Activated CD4-positive, alpha-beta T cell treated with anti-CD3 and anti-CD28 coated beads for 36 hours (primary cell): ENCODE measurements at regions of chr1 and their contacts with region 1.

Region 1: GRCh38 chr1:39098546-39099250 is 72.5 kb downstream of the NDUFS5 start:
- DNase-seq: peak; percentile 77
- ATAC-seq: peak; percentile 88
- H3K4me3 Mint-ChIP-seq: no peak overlapping the region
- H3K27ac Mint-ChIP-seq: no peak overlapping the region
- H3K4me1 Mint-ChIP-seq: peaks cover 22% of the 10 kb centered on the region
- H3K27me3 Mint-ChIP-seq: peaks cover 2% of the 10 kb centered on the region

Region 2: DNA sequence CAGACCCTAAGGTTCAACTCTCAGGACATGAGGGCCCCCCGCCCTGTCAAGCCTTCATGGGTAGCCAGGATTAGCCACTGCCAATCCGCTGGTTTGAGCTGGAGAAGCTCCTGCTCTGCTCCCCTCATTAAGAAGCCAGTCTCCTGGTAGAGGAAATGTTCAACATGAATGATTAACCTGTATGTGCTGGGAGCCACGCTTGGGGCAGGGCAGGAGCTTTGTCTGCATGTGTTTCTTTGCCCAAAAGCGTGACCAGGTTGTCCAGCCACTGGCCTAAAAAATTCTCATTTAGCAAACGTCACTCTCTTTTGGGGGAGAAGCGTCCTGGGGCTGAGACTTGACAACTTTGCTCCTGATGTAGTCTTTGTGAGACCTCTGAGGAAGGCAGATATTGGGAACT is 335.6 kb before region 1 on chr1:
- CTCF ChIA-PET with region 1: no interaction called
- POLR2A ChIA-PET with region 1: no interaction called
- intact Hi-C with region 1: no loop called
- DNase-seq: no peak
- ATAC-seq: no peak
- H3K4me3 Mint-ChIP-seq: no peak overlapping the region
- H3K27ac Mint-ChIP-seq: no peak overlapping the region
- H3K4me1 Mint-ChIP-seq: no peaks in the 10 kb centered on the region
- H3K27me3 Mint-ChIP-seq: peaks cover 21% of the 10 kb centered on the region

Region 3: GRCh38 chr1:39189592-39190041 is 90.9 kb after region 1 on chr1:
- CTCF ChIA-PET with region 1: interaction called, 31 read pairs
- POLR2A ChIA-PET with region 1: interaction called, 3 read pairs
- intact Hi-C with region 1: loop called (anchors 1 to 2 kb)
- DNase-seq: no peak
- ATAC-seq: no peak
- H3K4me3 Mint-ChIP-seq: no peak overlapping the region
- H3K27ac Mint-ChIP-seq: peak overlapping the region; percentile 91
- H3K4me1 Mint-ChIP-seq: peaks cover 90% of the 10 kb centered on the region
- H3K27me3 Mint-ChIP-seq: no peaks in the 10 kb centered on the region

Region 4: DNA sequence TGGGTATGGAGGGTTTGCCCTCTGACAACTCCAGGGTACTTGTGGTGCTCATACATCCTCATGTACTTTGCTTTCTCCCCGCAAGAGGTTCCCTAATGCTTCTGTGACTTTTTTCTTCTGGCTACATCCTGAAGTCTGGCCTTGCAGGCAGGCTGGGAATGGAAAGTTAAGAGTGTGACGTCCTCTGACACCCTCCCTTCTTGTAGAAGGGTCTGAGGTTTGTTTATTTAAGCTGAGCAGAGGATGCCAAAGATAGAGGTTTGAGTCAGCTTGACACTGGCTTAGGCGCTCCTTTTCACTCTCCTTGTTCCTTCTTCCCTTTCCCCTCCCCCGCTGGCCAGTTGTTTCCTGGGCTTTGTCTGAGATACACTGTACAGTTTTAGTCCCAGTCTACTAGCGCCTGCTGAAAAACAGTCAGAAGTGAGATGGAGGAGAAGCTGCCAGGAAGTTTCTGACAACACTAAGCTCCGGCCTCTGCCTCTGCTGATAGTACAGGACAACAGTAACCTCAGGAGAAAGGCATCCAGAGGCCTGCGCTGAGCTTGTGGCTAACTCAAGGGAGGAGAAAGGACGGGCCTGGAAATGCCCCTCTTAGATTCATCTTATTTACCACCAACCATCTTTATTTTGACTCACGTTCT is 105.9 kb after region 1 on chr1 and contains the start of gene MACF1:
- CTCF ChIA-PET with region 1: interaction called, 11 read pairs
- POLR2A ChIA-PET with region 1: no interaction called
- intact Hi-C with region 1: no loop called
- DNase-seq: peak; percentile 61
- ATAC-seq: peak; percentile 53
- H3K4me3 Mint-ChIP-seq: peak within 1 kb of the TSS; percentile 84
- H3K27ac Mint-ChIP-seq: peak within 1 kb of the TSS; percentile 96
- H3K4me1 Mint-ChIP-seq: peaks cover 65% of the 10 kb centered on the region
- H3K27me3 Mint-ChIP-seq: no peaks in the 10 kb centered on the region
- total RNA-seq, gene MACF1: 192 to 195 TPM

Region 5: GRCh38 chr1:39230261-39231190 is 131.8 kb after region 1 on chr1:
- CTCF ChIA-PET with region 1: no interaction called
- POLR2A ChIA-PET with region 1: no interaction called
- intact Hi-C with region 1: no loop called
- DNase-seq: peak; percentile 42
- ATAC-seq: peak; percentile 75
- H3K4me3 Mint-ChIP-seq: peak overlapping the region; percentile 27
- H3K27ac Mint-ChIP-seq: peak overlapping the region; percentile 59
- H3K4me1 Mint-ChIP-seq: peaks cover 53% of the 10 kb centered on the region
- H3K27me3 Mint-ChIP-seq: no peaks in the 10 kb centered on the region

Region 6: GRCh38 chr1:39268112-39268581 is 169.4 kb after region 1 on chr1:
- CTCF ChIA-PET with region 1: interaction called, 10 read pairs
- POLR2A ChIA-PET with region 1: no interaction called
- intact Hi-C with region 1: no loop called
- DNase-seq: peak; percentile 43
- ATAC-seq: peak; percentile 69
- H3K4me3 Mint-ChIP-seq: peak overlapping the region; percentile 57
- H3K27ac Mint-ChIP-seq: peak overlapping the region; percentile 88
- H3K4me1 Mint-ChIP-seq: peaks cover 79% of the 10 kb centered on the region
- H3K27me3 Mint-ChIP-seq: no peaks in the 10 kb centered on the region

Region 7: DNA sequence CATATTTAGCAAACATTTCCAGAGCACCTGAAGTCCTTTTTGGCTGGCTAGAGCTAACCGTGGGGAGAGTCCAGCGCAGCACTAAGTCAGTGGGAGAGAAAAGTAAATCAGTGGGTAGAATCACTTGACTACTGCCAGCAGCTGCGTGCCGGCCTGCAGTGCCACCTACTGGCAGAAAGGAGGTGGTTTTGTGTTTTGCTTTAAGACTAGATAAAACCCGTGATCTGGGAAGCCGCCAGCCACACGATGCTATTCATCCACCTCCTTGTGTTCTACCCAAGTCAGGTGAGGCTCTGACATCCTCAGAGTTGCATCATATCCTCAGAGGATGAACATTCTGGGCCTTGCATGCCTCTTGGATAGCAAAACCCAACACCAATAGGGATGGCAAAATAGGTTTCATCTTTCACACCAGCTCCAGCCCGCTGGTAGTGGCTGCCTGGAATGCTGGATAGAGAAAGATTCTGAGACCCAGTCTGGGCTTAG is 554.9 kb after region 1 on chr1:
- CTCF ChIA-PET with region 1: interaction called, 5 read pairs
- POLR2A ChIA-PET with region 1: no interaction called
- intact Hi-C with region 1: loop called in 1 of 2 experiments (anchors 2 kb)
- DNase-seq: peak; percentile 89
- ATAC-seq: peak; percentile 82
- H3K4me3 Mint-ChIP-seq: no peak overlapping the region
- H3K27ac Mint-ChIP-seq: peak overlapping the region; percentile 26
- H3K4me1 Mint-ChIP-seq: peaks cover 8% of the 10 kb centered on the region
- H3K27me3 Mint-ChIP-seq: peaks cover 3% of the 10 kb centered on the region